ENCODE measurements at regions of chr20 and their contacts with region 1.

Region 1: DNA sequence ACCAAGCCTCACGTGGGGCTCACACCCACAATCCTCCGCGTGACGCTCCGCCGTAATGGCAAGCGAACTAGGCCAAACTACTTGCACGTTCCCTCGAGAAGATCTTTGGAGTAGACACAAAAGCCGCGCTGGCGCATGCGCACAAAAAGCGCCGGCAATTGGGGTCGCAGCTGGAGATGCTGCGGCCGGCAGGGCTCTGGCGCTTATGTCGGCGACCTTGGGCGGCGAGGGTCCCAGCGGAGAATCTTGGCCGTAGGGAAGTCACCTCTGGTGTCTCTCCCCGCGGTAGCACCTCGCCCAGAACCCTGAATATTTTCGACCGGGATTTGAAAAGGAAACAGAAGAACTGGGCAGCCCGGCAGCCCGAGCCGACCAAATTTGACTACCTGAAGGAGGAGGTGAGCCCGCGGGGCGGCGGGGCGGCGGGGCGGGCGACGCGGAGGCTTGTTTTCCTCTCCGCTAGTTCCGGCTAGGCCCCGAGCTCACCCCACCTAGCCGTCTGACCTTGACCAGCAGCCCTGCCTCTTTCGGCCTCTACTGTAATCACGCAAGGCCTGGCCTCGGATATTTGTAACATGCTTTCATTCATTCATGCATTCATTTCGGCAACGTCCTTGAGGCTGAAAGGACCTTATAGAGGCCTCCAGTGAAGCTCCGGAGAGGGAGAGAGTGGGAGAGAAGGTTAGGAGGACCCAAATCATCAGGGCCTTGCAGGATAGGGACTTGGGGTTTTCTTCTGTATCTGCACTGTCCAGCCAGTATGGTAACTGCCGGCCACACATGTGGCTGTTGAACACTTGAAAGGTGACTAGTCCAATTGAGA is at the starts of genes ESF1 and NDUFAF5:
- DNase-seq: peak; percentile 97
- H3K4me3 ChIP-seq: peak within 1 kb of the TSS; percentile 90
- H3K27ac ChIP-seq: peak within 1 kb of the TSS; percentile 66
- H3K4me1 ChIP-seq: peaks cover 27% of the 10 kb centered on the region
- CTCF ChIP-seq: no peak
- total RNA-seq, gene ESF1: 10.1 and 16.9 TPM in 2 replicates
- total RNA-seq, gene NDUFAF5: 21.5 and 27.3 TPM in 2 replicates

Region 2: DNA sequence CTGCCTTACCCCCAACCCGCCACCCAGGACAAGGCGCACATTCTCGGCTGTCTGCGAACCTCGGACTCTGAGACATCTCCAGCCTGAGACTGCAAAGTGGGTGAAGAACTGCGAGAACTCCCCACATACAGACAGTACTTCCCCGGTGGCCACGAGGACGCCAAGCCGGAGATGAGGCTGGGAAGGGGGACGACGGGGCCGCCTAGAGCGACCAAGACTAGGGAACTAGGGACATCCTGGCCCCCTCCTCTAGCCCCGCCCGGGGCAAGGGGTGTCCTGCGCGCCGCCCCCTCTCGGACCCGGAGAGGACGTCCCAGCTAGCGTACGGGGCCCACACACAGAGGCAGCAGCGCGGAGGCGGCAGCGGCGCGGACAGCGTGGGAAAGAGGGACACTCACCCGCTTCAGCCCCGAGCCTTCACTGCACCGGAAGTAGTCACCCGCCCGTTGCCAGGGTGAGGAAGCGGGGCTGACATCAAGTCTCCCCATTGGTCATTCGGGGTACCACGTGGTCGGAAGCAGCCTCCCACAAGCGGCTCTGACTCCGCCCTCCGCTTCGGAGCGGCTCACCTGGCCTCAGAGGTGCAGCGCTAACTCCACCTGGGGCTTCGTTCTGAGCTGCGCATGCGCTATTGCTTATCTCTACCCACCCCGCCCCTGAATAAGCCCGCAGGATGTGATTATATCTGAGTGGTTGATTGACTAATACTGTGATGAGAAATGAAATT is 146.4 kb before region 1 on chr20 and contains the start of gene TASP1:
- CTCF ChIA-PET with region 1: no interaction called
- POLR2A ChIA-PET with region 1: no interaction called
- intact Hi-C with region 1: loop called (anchors 10 kb)
- DNase-seq: peak; percentile 96
- H3K4me3 ChIP-seq: peak within 1 kb of the TSS; percentile 92
- H3K27ac ChIP-seq: no peak within 1 kb of the TSS
- H3K4me1 ChIP-seq: peaks cover 12% of the 10 kb centered on the region
- CTCF ChIP-seq: no peak
- total RNA-seq, gene TASP1: 10.2 and 12.9 TPM in 2 replicates

Region 3: GRCh38 chr20:13800728-13801134 is 15.6 kb after region 1 on chr20:
- CTCF ChIA-PET with region 1: interaction called, 4 read pairs
- POLR2A ChIA-PET with region 1: interaction called, 10 read pairs
- intact Hi-C with region 1: no loop called
- DNase-seq: no peak
- H3K4me3 ChIP-seq: no peak overlapping the region
- H3K27ac ChIP-seq: no peak overlapping the region
- H3K4me1 ChIP-seq: no peaks in the 10 kb centered on the region
- CTCF ChIP-seq: no peak

Measured in OCI-LY7 (cell line).